ENCODE measurements at regions of chr14 and their contacts with region 1.

Region 1: DNA sequence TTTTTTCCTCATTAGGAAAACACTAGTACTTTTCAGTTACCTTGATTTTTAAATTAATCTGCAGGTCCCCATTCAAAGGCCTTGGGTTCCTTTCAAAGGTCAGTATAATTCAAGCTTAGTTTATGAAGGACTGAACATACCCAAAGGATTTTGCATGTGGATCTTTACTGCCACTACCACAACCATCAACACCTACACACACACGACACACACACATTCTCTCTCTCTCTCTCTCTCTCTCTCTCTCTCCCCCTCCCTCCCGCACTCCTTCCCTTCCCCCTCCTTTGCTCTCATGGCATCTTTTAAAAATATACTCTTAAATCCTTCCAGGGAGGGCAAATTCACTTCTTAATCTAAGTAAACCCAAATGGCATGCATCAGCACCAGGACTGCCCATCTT is 28.8 kb downstream of the HIF1A start:
- DNase-seq: no peak
- H3K4me3 ChIP-seq: no peak overlapping the region
- H3K27me3 ChIP-seq: no peaks in the 10 kb centered on the region
- CTCF ChIP-seq: no peak

Region 2: DNA sequence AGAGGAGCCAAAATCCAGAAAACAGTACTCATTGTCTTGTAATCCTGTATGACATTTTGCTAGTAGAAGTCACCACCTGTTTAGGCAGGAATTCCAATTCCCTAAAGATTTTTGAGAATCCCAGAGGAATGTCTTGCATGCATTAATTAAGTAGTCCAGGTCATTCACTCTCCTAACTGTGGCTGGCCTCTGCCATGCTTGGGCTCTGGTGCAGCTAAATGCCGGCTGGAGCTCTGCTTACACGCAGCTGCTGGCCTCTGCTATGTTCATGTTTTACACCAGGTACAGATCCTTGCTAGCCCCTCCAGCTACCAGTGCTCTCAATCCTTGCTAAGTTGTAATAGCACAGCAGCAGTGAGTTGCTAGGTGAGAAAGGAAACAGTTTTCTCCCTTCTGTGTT is 45.2 kb before region 1 on chr14:
- CTCF ChIA-PET with region 1: no interaction called
- POLR2A ChIA-PET with region 1: no interaction called
- DNase-seq: no peak
- H3K4me3 ChIP-seq: no peak overlapping the region
- H3K27me3 ChIP-seq: no peaks in the 10 kb centered on the region
- CTCF ChIP-seq: no peak

Region 3: GRCh38 chr14:61698206-61698980 is 25.7 kb before region 1 on chr14:
- CTCF ChIA-PET with region 1: no interaction called
- POLR2A ChIA-PET with region 1: interaction called, 13 read pairs
- DNase-seq: no peak
- H3K4me3 ChIP-seq: peak overlapping the region; percentile 69
- H3K27me3 ChIP-seq: no peaks in the 10 kb centered on the region
- CTCF ChIP-seq: no peak

Region 4: GRCh38 chr14:61750708-61751474 is 26.8 kb after region 1 on chr14:
- CTCF ChIA-PET with region 1: no interaction called
- POLR2A ChIA-PET with region 1: interaction called, 14 read pairs
- DNase-seq: no peak
- H3K4me3 ChIP-seq: peak overlapping the region; percentile 52
- H3K27me3 ChIP-seq: no peaks in the 10 kb centered on the region
- CTCF ChIP-seq: no peak

Measured in BJ (cell line).